ENCODE measurements at regions of chr6 and their contacts with region 1.

Region 1: DNA sequence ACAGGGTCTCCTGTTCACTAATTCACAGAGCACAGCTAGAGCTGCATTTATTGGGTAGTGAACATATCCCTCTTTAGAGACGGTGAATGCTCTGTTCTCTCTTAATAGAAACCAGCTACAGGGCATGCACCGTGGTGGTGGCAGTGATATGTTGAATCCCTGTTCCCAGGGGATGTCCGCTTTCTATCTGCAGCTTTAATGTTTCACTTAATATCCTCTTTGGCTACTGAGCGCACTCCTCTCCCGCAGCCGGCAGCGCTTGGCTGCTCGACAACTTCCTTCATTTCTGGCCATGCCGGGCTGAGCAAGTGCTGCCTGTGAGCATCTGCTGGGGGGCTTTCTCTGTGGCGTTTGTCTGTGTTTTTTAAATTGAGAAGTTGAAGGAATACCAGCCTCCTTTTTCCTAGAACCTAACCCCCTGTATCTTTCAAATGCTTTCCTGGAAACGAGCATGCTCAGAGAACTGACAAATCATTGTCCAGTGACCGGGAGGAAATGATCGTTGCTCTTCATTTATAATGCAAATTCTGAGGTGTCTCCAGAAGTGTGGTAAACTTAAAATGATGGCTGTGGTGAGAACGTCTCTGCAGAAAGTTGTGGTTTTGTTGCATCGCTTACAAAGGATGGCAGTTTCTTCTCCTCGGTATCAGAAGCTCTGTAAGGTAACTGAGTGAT is 297.9 kb downstream of the UTRN start:
- DNase-seq: peak; percentile 78

Region 2: DNA sequence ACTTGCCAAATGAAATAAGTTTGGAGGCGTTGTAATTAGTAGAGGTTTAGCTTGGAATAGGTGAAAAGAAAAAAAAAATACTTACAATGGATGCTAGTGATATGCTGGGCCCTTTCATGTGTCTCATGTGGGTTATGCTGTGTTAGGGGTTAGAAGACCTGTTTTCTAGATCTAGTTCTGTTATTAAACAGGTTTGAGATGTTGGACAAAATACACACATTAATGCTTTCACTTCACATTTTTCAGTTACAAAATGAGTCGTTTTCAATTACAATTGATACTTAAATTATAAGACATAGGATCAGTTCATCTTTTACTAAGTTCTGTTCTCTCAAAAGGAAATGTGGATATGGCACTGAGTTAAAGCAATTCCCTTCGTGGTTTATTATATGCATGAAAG is 642.4 kb after region 1 on chr6:
- intact Hi-C with region 1: loop called in 1 of 2 experiments (anchors 10 kb)
- DNase-seq: no peak